ENCODE measurements at regions of chr7 and their contacts with region 1.

Region 1: DNA sequence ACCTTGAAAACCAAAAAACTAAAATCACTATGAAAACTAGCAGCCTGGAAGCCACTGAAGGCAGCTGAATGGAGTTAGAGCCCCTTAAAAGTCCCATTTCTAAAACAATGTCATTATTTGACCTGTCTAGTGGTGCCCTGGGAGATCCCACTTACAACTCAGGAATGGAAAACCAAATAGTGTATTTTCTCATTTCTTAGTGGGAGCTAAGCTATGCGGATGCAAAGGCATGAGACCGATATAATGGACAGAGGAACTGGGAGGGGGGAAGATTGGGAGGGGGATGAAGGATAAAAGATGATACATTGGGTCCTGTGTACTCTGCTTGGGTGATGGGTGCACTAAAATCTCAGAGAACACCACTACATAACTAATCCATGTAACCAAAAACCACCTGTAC is 9.8 kb upstream of the GIMAP2 start:
- DNase-seq: no peak
- ATAC-seq: no peak
- H3K4me3 ChIP-seq: no peak overlapping the region
- H3K27ac ChIP-seq: peak overlapping the region; percentile 20
- H3K4me1 ChIP-seq: no peaks in the 10 kb centered on the region
- H3K27me3 ChIP-seq: no peaks in the 10 kb centered on the region

Region 2: GRCh38 chr7:150335108-150335773 is 340.5 kb before region 1 on chr7:
- intact Hi-C with region 1: no loop called
- DNase-seq: peak in 1 of 3 donors; percentile 54
- ATAC-seq: peak; percentile 18 to 43
- H3K4me3 ChIP-seq: no peak overlapping the region
- H3K27ac ChIP-seq: peak overlapping the region; percentile 19
- H3K4me1 ChIP-seq: peaks cover 4% of the 10 kb centered on the region
- H3K27me3 ChIP-seq: no peaks in the 10 kb centered on the region

Region 3: GRCh38 chr7:150737265-150738055 is 61.7 kb after region 1 on chr7 and contains the start of gene GIMAP5:
- intact Hi-C with region 1: loop called in 1 of 4 experiments (anchors 2 kb)
- DNase-seq: peak in 1 of 3 donors; percentile 65
- ATAC-seq: peak; percentile 73 to 81
- H3K4me3 ChIP-seq: peak within 1 kb of the TSS; percentile 50
- H3K27ac ChIP-seq: peak within 1 kb of the TSS; percentile 54
- H3K4me1 ChIP-seq: peaks cover 4% of the 10 kb centered on the region
- H3K27me3 ChIP-seq: no peaks in the 10 kb centered on the region
- total RNA-seq, gene GIMAP5: 9.3 to 24.2 (median 11.1) TPM